Left lung (tissue), 14 donors: ENCODE measurements at regions of chr1 and their contacts with region 1.

Region 1: GRCh38 chr1:159891275-159892157 is 8.4 kb downstream of the CFAP45 start:
- DNase-seq: peak; percentile 61 to 93 (median 86)
- ATAC-seq: peak; percentile 97
- H3K4me3 ChIP-seq: no peak overlapping the region
- H3K27ac ChIP-seq: no peak overlapping the region
- H3K4me1 ChIP-seq: peaks cover 20 to 43% of the 10 kb centered on the region in 2 donors
- H3K27me3 ChIP-seq: no peaks in the 10 kb centered on the region
- CTCF ChIP-seq: peak; percentile 87 to 96

Region 2: GRCh38 chr1:159798893-159799292 is 92.6 kb before region 1 on chr1:
- intact Hi-C with region 1: loop called in 1 of 2 experiments (anchors 5 kb)
- DNase-seq: peak in 3 of 4 donors; percentile 55 to 75 (median 61)
- ATAC-seq: peak; percentile 97
- H3K4me3 ChIP-seq: no peak overlapping the region
- H3K27ac ChIP-seq: no peak overlapping the region
- H3K4me1 ChIP-seq: peaks cover 0 to 14% of the 10 kb centered on the region in 2 donors
- H3K27me3 ChIP-seq: peaks cover 0 to 5% of the 10 kb centered on the region in 2 donors
- CTCF ChIP-seq: peak; percentile 53 to 76

Region 3: GRCh38 chr1:159854693-159855192 is 36.8 kb before region 1 on chr1:
- intact Hi-C with region 1: no loop called
- DNase-seq: peak; percentile 78 to 96 (median 90)
- ATAC-seq: peak; percentile 96
- H3K4me3 ChIP-seq: peak overlapping the region; percentile 63 to 75
- H3K27ac ChIP-seq: peak overlapping the region; percentile 91 to 96
- H3K4me1 ChIP-seq: peaks cover 0 to 32% of the 10 kb centered on the region in 2 donors
- H3K27me3 ChIP-seq: no peaks in the 10 kb centered on the region
- CTCF ChIP-seq: peak in 1 of 2 donors; percentile 32